A549 (cell line): ENCODE measurements at regions of chr16 and their contacts with region 1.

Region 1: GRCh38 chr16:46555951-46556350 is 65.2 kb downstream of the SHCBP1 start:
- DNase-seq: no peak
- ATAC-seq: no peak
- H3K4me3 ChIP-seq: no peak overlapping the region
- H3K27ac ChIP-seq: no peak overlapping the region
- H3K4me1 ChIP-seq: no peaks in the 10 kb centered on the region
- CTCF ChIP-seq: no peak
- EP300 ChIP-seq: no peak
- POLR2A ChIP-seq: no peak
- RAD21 ChIP-seq: no peak

Region 2: GRCh38 chr16:46568472-46569230 is 12.7 kb after region 1 on chr16:
- CTCF ChIA-PET with region 1: interaction called, 17 read pairs
- POLR2A ChIA-PET with region 1: no interaction called
- DNase-seq: no peak
- ATAC-seq: no peak
- H3K4me3 ChIP-seq: no peak overlapping the region
- H3K27ac ChIP-seq: no peak overlapping the region
- H3K4me1 ChIP-seq: peaks cover 5% of the 10 kb centered on the region; the same call in 1 of the 3 replicates
- CTCF ChIP-seq: no peak
- EP300 ChIP-seq: no peak
- POLR2A ChIP-seq: no peak
- RAD21 ChIP-seq: no peak

Region 3: GRCh38 chr16:46607529-46607928 is 51.6 kb after region 1 on chr16:
- CTCF ChIA-PET with region 1: interaction called, 117 read pairs
- POLR2A ChIA-PET with region 1: no interaction called
- DNase-seq: peak; percentile 26 to 57
- ATAC-seq: peak; percentile 70 to 77; a peak in 5 of 6 replicates
- H3K4me3 ChIP-seq: no peak overlapping the region
- H3K27ac ChIP-seq: no peak overlapping the region
- H3K4me1 ChIP-seq: no peaks in the 10 kb centered on the region
- CTCF ChIP-seq: peak; percentile 57
- EP300 ChIP-seq: no peak
- POLR2A ChIP-seq: no peak
- RAD21 ChIP-seq: peak; percentile 51 to 65; a peak in 4 of 5 replicates

Region 4: DNA sequence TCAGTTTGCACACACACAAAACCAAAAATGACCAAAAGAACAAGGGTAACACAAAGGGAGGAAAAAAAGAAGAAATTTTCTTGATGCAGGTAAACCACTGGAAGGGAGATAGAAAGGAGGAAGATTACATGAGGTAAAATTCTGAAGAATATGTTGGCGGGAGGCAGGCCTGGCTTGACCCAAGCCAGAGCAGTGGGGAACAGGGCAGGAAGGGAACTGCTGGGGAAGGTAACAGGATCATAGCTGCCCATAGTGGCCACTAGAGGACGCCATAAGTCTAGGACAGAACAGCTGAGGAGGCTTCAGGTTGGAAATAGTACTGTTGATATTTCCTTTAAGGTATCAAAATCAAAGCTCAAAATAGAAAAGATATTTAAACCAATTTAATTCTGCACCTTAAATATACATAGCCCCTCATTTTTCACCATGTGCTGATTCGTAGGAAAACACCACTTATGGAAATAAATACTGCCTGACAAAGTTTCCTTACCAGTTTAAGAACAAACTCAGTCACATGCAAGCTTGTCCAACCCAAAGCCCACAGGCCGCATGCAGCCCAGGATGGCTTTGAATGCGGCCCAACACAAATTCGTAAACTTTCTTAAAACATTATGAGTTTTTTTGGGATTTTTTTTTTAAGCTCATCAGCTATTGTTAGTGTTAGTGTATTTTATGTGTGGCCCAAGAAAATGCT is 117.5 kb after region 1 on chr16:
- CTCF ChIA-PET with region 1: no interaction called
- POLR2A ChIA-PET with region 1: no interaction called
- DNase-seq: peak; percentile 74 to 78
- ATAC-seq: peak; percentile 99 to 100
- H3K4me3 ChIP-seq: no peak overlapping the region
- H3K27ac ChIP-seq: no peak overlapping the region
- H3K4me1 ChIP-seq: no peaks in the 10 kb centered on the region
- CTCF ChIP-seq: peak; percentile 93
- EP300 ChIP-seq: no peak
- POLR2A ChIP-seq: no peak
- RAD21 ChIP-seq: peak; percentile 73 to 85